ENCODE measurements at regions of chr9 and their contacts with region 1.

Region 1: GRCh38 chr9:98974994-98975712 is 31.4 kb downstream of the COL15A1 start:
- DNase-seq: peak; percentile 94
- ATAC-seq: peak; percentile 89
- H3K4me3 Mint-ChIP-seq: peak overlapping the region; percentile 8; the same call in 1 of the 2 replicates
- H3K27ac Mint-ChIP-seq: no peak overlapping the region
- H3K4me1 Mint-ChIP-seq: peaks cover 37% of the 10 kb centered on the region
- H3K27me3 Mint-ChIP-seq: peaks cover 33% of the 10 kb centered on the region
- CTCF ChIP-seq: peak; percentile 97

Region 2: DNA sequence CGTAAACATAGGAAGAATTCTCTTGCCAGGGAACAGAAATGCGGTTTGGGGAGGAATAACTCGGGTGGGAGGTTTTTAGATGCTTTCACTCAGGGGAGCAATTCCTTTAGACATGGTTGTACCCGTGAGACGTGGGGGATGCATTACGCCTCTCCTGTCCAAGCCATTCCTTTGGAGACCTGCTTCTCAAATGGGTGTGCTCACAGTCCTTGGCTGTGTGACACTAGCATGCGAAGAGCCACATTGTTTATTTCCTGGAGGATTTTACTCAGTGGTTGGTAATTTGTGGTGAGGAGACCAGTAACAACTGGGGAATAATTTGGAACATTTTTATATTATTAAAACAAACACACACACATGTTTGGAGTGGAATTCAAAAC is 13.0 kb before region 1 on chr9:
- CTCF ChIA-PET with region 1: interaction called, 16 read pairs
- POLR2A ChIA-PET with region 1: no interaction called
- DNase-seq: no peak
- ATAC-seq: no peak
- H3K4me3 Mint-ChIP-seq: no peak overlapping the region
- H3K27ac Mint-ChIP-seq: no peak overlapping the region
- H3K4me1 Mint-ChIP-seq: peaks cover 21% of the 10 kb centered on the region
- H3K27me3 Mint-ChIP-seq: no peaks in the 10 kb centered on the region; the same call in 1 of the 2 replicates
- CTCF ChIP-seq: no peak

Region 3: DNA sequence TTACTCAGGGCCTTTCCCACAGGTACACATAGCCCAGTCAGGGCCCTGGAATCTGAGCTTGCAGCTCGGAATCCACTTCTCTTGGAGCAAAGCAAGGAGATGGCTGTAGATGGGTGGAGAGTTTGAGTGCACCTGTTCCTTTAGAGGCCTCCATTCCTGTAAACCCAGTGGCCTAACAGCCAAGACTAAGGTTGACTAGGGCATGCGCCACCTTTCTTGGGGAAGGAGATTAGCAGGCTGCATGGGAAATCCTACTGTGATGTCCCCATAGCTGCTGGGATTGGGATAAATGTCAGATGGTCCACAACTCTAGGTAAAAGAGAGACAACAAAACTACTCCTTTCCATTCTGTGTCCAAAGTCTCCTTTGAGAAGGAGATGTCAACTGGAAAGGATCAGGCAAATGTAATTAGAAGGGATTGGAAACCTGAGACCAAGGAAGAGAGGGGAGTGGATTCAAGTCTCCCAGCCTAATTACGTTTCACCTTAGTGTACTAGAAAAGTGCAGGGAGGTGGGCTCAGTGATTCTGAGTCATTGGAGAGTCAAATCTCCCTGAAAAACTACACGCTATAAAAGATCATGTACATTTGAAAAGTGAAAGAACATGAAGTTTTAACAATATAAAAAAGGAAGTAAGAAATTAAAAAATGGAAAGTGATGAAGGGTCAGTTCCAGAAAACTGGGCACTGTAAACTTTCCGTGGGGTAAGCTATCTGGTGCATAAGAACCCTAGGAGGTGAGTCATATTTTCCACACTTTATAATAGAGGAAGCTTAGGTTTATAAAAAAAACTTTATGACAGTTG is 351.2 kb after region 1 on chr9:
- CTCF ChIA-PET with region 1: no interaction called
- POLR2A ChIA-PET with region 1: no interaction called
- DNase-seq: no peak
- ATAC-seq: peak; percentile 72
- H3K4me3 Mint-ChIP-seq: no peak overlapping the region
- H3K27ac Mint-ChIP-seq: no peak overlapping the region
- H3K4me1 Mint-ChIP-seq: peaks cover 9% of the 10 kb centered on the region
- H3K27me3 Mint-ChIP-seq: no peaks in the 10 kb centered on the region
- CTCF ChIP-seq: no peak